Heart left ventricle (tissue), 16 donors: ENCODE measurements at regions of chr1 and their contacts with region 1.

Region 1: GRCh38 chr1:211680752-211681327 is 5.4 kb upstream of the NEK2 start:
- DNase-seq: peak; percentile 43 to 74 (median 60)
- ATAC-seq: peak; percentile 68 to 92 (median 87)
- H3K4me3 ChIP-seq: no peak overlapping the region
- H3K27ac ChIP-seq: peak overlapping the region in 1 of 12 donors; percentile 54
- H3K4me1 ChIP-seq: peaks cover 0 to 10% (median under 1%) of the 10 kb centered on the region in 12 donors
- H3K27me3 ChIP-seq: peaks cover 0 to under 1% (median 0%) of the 10 kb centered on the region in 9 donors
- CTCF ChIP-seq: peak; percentile 56 to 80 (median 69)
- POLR2A ChIP-seq: no peak

Region 2: GRCh38 chr1:211591980-211592493 is 88.8 kb before region 1 on chr1:
- intact Hi-C with region 1: no loop called
- DNase-seq: no peak
- ATAC-seq: peak in 3 of 4 donors; percentile 54 to 80 (median 65)
- H3K4me3 ChIP-seq: no peak overlapping the region
- H3K27ac ChIP-seq: peak overlapping the region in 4 of 12 donors; percentile 1 to 54 (median 18)
- H3K4me1 ChIP-seq: peaks cover 0 to 55% (median 4%) of the 10 kb centered on the region in 12 donors
- H3K27me3 ChIP-seq: no peaks in the 10 kb centered on the region
- CTCF ChIP-seq: no peak
- POLR2A ChIP-seq: no peak

Region 3: GRCh38 chr1:211625040-211625439 is 55.8 kb before region 1 on chr1:
- intact Hi-C with region 1: no loop called
- DNase-seq: peak in 3 of 5 donors; percentile 46 to 52 (median 50)
- ATAC-seq: peak in 3 of 4 donors; percentile 56 to 72 (median 68)
- H3K4me3 ChIP-seq: no peak overlapping the region
- H3K27ac ChIP-seq: no peak overlapping the region
- H3K4me1 ChIP-seq: peaks cover 0 to 22% (median 5%) of the 10 kb centered on the region in 12 donors
- H3K27me3 ChIP-seq: no peaks in the 10 kb centered on the region
- CTCF ChIP-seq: peak in 10 of 12 donors; percentile 14 to 46 (median 30)
- POLR2A ChIP-seq: no peak

Region 4: GRCh38 chr1:211830330-211831142 is 149.7 kb after region 1 on chr1 and contains the start of gene LPGAT1:
- intact Hi-C with region 1: loop called in 5 of 10 experiments (anchors 2 to 5 kb)
- DNase-seq: peak; percentile 82 to 90 (median 83)
- ATAC-seq: peak; percentile 93 to 98 (median 96)
- H3K4me3 ChIP-seq: peak within 1 kb of the TSS; percentile 54 to 99 (median 80)
- H3K27ac ChIP-seq: peak within 1 kb of the TSS; percentile 85 to 97 (median 91)
- H3K4me1 ChIP-seq: peaks cover 0 to 53% (median 20%) of the 10 kb centered on the region in 12 donors
- H3K27me3 ChIP-seq: no peaks in the 10 kb centered on the region
- CTCF ChIP-seq: peak; percentile 50 to 86 (median 77)
- POLR2A ChIP-seq: peak in 1 of 2 donors; percentile 41
- total RNA-seq, gene LPGAT1: 19.0 to 40.0 (median 30.9) TPM

Region 5: DNA sequence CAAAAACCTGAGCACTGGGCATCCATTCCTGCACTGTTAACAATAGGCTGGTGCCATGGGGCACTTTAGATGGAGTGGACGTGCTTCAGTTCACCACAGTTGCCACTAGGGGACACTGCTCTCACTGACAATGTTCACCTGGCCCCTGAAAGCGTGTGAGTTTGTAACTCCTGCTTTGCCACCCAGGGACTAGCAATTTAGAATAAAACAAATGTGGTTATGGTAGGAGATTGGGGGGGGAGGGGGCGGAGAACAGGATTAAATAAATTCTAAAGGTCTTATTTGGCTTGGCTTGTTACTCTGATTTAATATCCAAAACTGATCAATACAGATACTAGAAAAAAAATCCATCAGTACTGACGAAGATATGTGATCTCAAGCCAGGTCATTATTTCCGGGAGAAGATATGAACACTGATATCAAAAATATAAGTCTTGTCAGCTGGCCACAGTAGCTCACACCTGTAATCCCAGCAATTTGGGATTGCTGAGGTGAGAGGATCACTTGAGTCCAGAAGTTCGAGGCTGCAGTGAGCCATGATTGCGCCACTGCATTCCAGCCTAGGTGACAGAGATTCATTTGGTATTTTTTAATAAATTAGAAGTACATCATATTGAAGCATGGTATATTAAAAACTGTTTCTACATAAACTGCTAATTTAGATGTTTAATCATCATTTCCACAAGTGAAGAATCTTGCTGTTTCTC is 331.3 kb after region 1 on chr1:
- intact Hi-C with region 1: loop called in 2 of 10 experiments (anchors 5 to 10 kb)
- DNase-seq: peak in 4 of 5 donors; percentile 39 to 66 (median 59)
- ATAC-seq: peak; percentile 69 to 93 (median 86)
- H3K4me3 ChIP-seq: no peak overlapping the region
- H3K27ac ChIP-seq: no peak overlapping the region
- H3K4me1 ChIP-seq: no peaks in the 10 kb centered on the region
- H3K27me3 ChIP-seq: no peaks in the 10 kb centered on the region
- CTCF ChIP-seq: peak; percentile 84 to 95 (median 90)
- POLR2A ChIP-seq: no peak

Region 6: GRCh38 chr1:212035123-212035834 is 354.4 kb after region 1 on chr1 and contains the starts of genes DTL and INTS7:
- intact Hi-C with region 1: loop called in 7 of 10 experiments (anchors 1 to 10 kb)
- DNase-seq: peak; percentile 99 to 100 (median 99)
- ATAC-seq: peak; percentile 98 to 99 (median 98)
- H3K4me3 ChIP-seq: peak within 1 kb of the TSS; percentile 35 to 79 (median 62)
- H3K27ac ChIP-seq: peak within 1 kb of the TSS; percentile 72 to 93 (median 88)
- H3K4me1 ChIP-seq: peaks cover 0 to 49% (median 22%) of the 10 kb centered on the region in 12 donors
- H3K27me3 ChIP-seq: no peaks in the 10 kb centered on the region
- CTCF ChIP-seq: peak; percentile 87 to 99 (median 94)
- POLR2A ChIP-seq: peak in 1 of 2 donors; percentile 48
- total RNA-seq, gene DTL: 0.20 to 6.2 (median 0.47) TPM in 8 of 9 donors, not detected in the other
- total RNA-seq, gene INTS7: 5.8 to 12.9 (median 9.5) TPM

Region 7: DNA sequence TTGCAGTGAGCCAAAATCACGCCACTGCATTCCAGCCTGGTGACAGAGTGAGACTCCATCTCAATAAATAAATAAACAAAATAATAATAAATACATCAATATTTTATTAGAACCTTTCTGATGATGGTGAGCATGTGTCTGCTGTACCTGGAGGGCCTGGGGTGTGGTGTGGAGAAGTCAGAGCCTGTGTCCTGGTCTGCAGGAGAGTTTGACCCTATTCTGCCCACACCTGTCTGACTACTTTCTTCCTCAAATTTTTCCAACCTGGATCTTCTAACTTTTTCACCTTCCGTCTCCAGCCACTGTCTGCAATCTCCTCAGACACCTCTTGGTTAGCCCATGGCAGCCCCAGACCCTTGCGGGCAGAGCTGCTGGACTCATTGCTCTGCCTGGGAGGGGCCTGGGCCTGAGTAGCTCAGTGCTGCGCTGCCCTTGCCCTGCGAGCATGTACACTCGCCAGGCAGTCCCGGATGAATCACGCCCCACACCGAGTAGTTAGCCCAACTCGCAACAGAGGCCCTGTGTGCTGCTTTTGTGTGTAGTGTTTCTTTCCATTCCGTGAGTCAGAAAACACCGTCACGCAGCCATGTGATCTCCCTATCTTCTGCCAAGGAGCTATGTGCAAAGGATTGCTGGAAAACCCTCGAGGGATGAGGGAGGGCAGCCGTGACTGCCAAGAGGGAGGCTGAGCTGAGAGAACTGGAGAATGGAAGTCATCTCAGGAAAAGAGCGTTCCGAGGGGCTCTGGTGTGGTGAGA is 789.0 kb after region 1 on chr1:
- intact Hi-C with region 1: loop called in 2 of 10 experiments (anchors 10 kb)
- DNase-seq: peak; percentile 60 to 87 (median 70)
- ATAC-seq: peak; percentile 76 to 95 (median 88)
- H3K4me3 ChIP-seq: no peak overlapping the region
- H3K27ac ChIP-seq: peak overlapping the region in 9 of 12 donors; percentile 13 to 84 (median 46)
- H3K4me1 ChIP-seq: peaks cover 0 to 15% (median 3%) of the 10 kb centered on the region in 12 donors
- H3K27me3 ChIP-seq: no peaks in the 10 kb centered on the region
- CTCF ChIP-seq: no peak
- POLR2A ChIP-seq: no peak